ENCODE measurements at regions of chr5 and their contacts with region 1.

Region 1: DNA sequence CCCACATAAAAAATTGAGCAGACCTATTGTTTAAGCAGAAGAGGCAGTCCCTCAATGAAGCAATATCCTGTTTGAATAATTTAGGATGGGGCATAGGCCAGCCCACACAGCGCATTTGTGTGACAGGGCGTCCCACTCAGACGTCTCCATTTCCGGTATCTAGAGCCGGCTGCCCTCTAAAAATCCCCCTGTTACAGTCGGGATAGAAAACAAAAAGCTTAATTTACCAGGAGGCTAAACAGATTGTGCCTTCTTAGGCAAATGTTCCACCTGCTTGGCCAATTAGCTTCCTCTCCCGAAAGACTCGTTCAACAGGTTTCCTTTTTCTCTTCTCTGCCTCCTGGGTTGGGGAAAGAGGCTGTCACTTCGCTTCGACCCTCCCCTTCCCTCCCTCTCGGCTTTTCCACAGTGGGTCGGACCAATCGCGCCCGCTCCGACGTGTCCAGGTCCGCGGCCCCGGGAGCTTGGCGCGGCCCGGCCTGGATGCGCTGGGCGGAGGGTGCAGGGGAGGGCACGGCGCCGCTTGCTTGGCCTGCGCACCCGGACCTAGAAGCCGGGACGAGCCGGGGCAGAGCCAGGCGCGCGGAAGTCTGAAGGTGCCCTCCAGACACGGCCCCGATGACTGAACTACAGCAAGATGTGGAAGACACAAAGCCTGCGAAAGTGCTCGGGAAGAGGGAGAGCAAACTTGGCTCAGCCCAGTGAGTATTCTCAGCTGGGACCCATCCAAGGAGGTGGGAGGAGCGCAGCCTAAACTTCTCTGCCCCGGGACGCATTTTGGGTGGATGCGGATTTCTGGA is at the start of gene GRAMD2B:
- DNase-seq: peak; percentile 53
- H3K4me3 Mint-ChIP-seq: peak within 1 kb of the TSS; percentile 86
- H3K27ac Mint-ChIP-seq: peak within 1 kb of the TSS; percentile 81
- H3K4me1 Mint-ChIP-seq: peaks cover 40% of the 10 kb centered on the region
- H3K27me3 Mint-ChIP-seq: no peaks in the 10 kb centered on the region
- total RNA-seq, gene GRAMD2B: 8.3 and 9.5 TPM in 2 replicates

Region 2: DNA sequence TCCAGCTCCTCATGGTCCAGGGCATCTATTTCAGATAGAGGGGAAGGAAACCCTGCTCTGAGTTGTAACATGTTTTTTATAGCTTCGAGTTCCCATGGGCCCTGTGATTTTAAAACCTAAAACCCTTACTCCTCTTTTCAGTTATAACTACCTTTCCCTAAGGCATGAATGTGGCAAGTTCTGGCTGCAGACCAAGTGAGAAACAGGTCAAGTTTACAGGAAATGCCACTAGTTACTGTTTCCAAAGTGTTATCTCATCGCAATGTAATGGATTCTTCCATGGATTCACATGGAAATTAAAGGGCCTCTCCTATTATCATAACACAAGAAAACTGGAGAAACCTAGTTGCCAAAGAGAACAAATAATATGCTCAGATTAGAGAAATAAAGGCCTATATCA is 574.4 kb before region 1 on chr5:
- intact Hi-C with region 1: no loop called
- DNase-seq: no peak
- H3K4me3 Mint-ChIP-seq: no peak overlapping the region
- H3K27ac Mint-ChIP-seq: no peak overlapping the region
- H3K4me1 Mint-ChIP-seq: no peaks in the 10 kb centered on the region
- H3K27me3 Mint-ChIP-seq: no peaks in the 10 kb centered on the region

Region 3: GRCh38 chr5:126438267-126438666 is 15.1 kb after region 1 on chr5:
- intact Hi-C with region 1: loop called (anchors 1 kb)
- DNase-seq: no peak
- H3K4me3 Mint-ChIP-seq: no peak overlapping the region
- H3K27ac Mint-ChIP-seq: peak overlapping the region; percentile 9
- H3K4me1 Mint-ChIP-seq: peaks cover 22% of the 10 kb centered on the region
- H3K27me3 Mint-ChIP-seq: no peaks in the 10 kb centered on the region

Region 4: GRCh38 chr5:126483156-126483555 is 60.0 kb after region 1 on chr5:
- intact Hi-C with region 1: no loop called
- DNase-seq: no peak
- H3K4me3 Mint-ChIP-seq: no peak overlapping the region
- H3K27ac Mint-ChIP-seq: no peak overlapping the region
- H3K4me1 Mint-ChIP-seq: no peaks in the 10 kb centered on the region
- H3K27me3 Mint-ChIP-seq: no peaks in the 10 kb centered on the region

Region 5: DNA sequence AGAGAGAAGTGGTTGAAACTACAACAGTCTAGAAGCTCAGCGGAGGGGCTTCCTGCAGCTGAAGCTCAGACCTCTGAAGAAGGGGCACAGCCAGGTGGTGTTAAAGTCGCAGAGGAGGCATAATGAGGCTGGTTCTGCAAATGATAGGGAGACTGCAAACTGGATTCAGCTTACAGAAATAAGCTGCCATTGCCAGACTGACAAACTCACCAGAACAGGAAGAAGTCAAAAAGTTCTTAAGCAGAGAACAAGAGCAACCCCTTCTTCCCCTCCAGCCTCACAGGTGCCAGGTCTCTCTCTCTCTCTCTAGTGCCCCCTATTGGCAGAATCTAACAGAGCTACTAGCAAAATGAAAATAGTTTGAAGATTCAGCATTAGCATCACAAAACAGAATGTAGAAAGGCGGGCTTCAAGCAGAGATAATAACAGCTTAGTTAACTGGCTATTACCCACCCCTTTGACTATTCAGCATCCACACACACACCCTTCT is 76.7 kb after region 1 on chr5:
- intact Hi-C with region 1: loop called (anchors 5 kb)
- DNase-seq: peak; percentile 11
- H3K4me3 Mint-ChIP-seq: no peak overlapping the region
- H3K27ac Mint-ChIP-seq: no peak overlapping the region
- H3K4me1 Mint-ChIP-seq: peaks cover 4% of the 10 kb centered on the region
- H3K27me3 Mint-ChIP-seq: no peaks in the 10 kb centered on the region

Region 6: DNA sequence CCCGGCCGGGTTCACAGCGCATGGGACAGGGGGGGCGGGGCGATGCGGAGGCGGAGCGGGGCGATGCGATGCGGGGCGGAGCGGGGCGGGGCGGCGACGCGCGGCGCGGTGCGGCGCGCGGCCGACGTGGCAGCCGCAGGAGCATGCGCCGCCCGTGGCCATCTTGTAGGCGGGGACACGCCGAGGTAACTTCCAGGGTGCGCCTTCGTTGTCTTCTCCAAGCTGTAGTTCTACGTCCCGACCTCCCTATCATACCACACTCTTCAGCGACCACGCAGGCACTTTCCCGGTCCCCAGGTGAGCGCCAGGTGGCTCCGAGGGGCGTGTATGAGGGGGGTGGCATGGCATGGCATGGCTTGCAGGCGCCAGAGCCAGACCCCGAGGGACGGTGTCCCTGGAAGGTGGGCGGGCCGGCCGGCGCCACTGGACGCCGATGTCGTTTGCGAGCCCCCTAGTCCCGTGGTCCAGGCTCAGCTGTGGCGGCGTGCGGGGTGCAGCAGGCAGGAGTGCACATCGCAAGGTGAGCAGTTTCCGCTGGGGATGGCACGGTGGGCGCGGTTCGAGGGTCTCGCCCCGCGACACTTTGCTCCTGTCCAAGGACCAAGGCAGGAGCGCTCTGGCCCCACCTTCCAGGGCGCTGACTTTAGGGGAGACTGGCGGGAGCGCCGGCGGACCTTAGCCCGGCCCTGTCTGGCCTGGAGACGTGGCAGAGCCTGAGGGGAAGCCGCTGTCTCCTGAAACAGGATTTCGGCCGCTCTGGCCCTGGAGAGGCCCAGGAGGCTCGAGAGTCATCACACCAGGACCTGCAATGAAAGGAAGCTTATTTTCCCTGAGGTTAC is 1094.5 kb after region 1 on chr5 and contains the start of gene PRRC1:
- intact Hi-C with region 1: loop called (anchors 5 kb)
- DNase-seq: peak; percentile 73
- H3K4me3 Mint-ChIP-seq: peak within 1 kb of the TSS; percentile 84
- H3K27ac Mint-ChIP-seq: peak within 1 kb of the TSS; percentile 59
- H3K4me1 Mint-ChIP-seq: peaks cover 26% of the 10 kb centered on the region
- H3K27me3 Mint-ChIP-seq: peaks cover 7% of the 10 kb centered on the region
- total RNA-seq, gene PRRC1: 52.9 and 59.7 TPM in 2 replicates